A549 (cell line): ENCODE measurements at regions of chr22 and their contacts with region 1.

Region 1: DNA sequence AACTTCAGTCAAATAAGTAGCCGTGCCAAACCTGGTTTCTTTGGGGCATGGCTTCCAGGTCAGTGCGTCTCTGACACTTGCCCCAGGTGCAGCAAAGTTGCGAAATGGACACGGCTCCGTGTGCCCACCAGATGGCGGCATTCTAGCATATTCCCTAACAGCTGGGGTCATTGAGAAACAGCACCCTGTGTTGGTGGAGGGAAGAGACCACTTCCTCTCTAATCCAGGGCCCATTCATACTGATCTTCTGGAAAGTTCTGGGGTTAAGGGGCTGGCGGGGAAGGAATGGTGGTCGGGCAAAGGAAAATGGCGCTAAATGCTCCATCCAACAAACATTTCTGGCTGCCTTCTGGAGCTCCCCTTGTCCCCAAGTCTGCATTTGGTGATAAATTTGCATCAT is 141.2 kb upstream of the TIMP3 start:
- DNase-seq: peak; percentile 47 to 49
- ATAC-seq: peak; percentile 71 to 77; a peak in 4 of 6 replicates
- H3K4me3 ChIP-seq: no peak overlapping the region
- H3K27ac ChIP-seq: no peak overlapping the region
- H3K4me1 ChIP-seq: no peaks in the 10 kb centered on the region
- CTCF ChIP-seq: peak; percentile 49
- EP300 ChIP-seq: no peak
- POLR2A ChIP-seq: no peak
- RAD21 ChIP-seq: peak; percentile 64 to 73

Region 2: GRCh38 chr22:32648486-32648885 is 11.8 kb before region 1 on chr22:
- CTCF ChIA-PET with region 1: interaction called, 10 read pairs
- POLR2A ChIA-PET with region 1: no interaction called
- DNase-seq: no peak
- ATAC-seq: no peak
- H3K4me3 ChIP-seq: no peak overlapping the region
- H3K27ac ChIP-seq: no peak overlapping the region
- H3K4me1 ChIP-seq: no peaks in the 10 kb centered on the region
- CTCF ChIP-seq: no peak
- EP300 ChIP-seq: no peak
- POLR2A ChIP-seq: no peak
- RAD21 ChIP-seq: no peak

Region 3: DNA sequence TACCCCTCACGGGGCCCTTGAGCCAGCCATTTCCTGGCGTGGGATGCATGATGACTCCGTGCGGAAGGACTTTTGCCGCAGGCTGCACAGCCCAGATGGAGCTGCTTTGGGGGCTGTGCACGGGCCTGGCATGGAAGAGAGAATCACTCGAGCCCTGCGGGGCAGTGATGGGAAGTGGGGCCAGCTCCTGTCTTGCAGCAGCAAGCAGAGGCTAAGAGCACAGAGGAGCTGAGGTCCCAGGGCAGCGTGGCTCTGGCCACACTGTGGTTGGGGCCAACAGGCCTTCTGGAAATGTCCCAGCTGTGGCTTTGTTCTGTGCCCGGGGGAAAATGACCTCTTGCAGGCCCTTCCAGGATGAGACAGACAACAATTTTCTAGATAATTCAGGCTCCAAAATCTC is 48.5 kb after region 1 on chr22:
- CTCF ChIA-PET with region 1: no interaction called
- POLR2A ChIA-PET with region 1: no interaction called
- DNase-seq: no peak
- ATAC-seq: no peak
- H3K4me3 ChIP-seq: no peak overlapping the region
- H3K27ac ChIP-seq: no peak overlapping the region
- H3K4me1 ChIP-seq: no peaks in the 10 kb centered on the region
- CTCF ChIP-seq: no peak
- EP300 ChIP-seq: no peak
- POLR2A ChIP-seq: no peak
- RAD21 ChIP-seq: no peak